Colonic mucosa (tissue), 4 donors: ENCODE measurements at regions of chr11 and their contacts with region 1.

Region 1: DNA sequence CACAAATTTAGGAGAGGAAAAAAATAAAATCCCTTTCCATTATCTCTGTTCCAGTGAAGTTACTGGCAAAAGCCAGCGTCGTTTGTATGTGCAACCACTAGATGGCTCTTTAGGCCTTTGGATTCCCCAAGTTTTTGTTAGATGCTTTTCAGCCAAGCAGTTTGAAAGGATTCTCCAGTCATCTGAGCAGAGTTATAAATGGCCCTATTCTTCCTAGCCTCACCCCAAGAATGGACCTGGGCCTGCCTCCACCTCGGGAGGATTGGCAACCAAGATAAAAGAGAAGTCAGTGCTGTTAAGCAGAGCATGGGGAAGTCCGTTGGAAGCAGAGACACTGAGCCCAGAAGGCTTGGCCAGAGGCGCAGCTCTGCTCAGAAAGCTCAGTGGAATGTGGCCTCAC is 15.4 kb downstream of the FAM181B start:
- DNase-seq: no peak
- H3K4me3 ChIP-seq: no peak overlapping the region
- H3K27ac ChIP-seq: no peak overlapping the region
- H3K4me1 ChIP-seq: no peaks in the 10 kb centered on the region
- H3K27me3 ChIP-seq: no peaks in the 10 kb centered on the region
- CTCF ChIP-seq: peak; percentile 61

Region 2: GRCh38 chr11:82864268-82864667 is 146.0 kb after region 1 on chr11:
- intact Hi-C with region 1: loop called (anchors 5 kb)
- DNase-seq: peak; percentile 41
- H3K4me3 ChIP-seq: no peak overlapping the region
- H3K27ac ChIP-seq: no peak overlapping the region
- H3K4me1 ChIP-seq: no peaks in the 10 kb centered on the region
- H3K27me3 ChIP-seq: no peaks in the 10 kb centered on the region
- CTCF ChIP-seq: peak; percentile 35

Region 3: GRCh38 chr11:82927254-82927880 is 209.1 kb after region 1 on chr11:
- intact Hi-C with region 1: no loop called
- DNase-seq: peak; percentile 42
- H3K4me3 ChIP-seq: no peak overlapping the region
- H3K27ac ChIP-seq: no peak overlapping the region
- H3K4me1 ChIP-seq: no peaks in the 10 kb centered on the region
- H3K27me3 ChIP-seq: no peaks in the 10 kb centered on the region
- CTCF ChIP-seq: peak; percentile 85

Region 4: DNA sequence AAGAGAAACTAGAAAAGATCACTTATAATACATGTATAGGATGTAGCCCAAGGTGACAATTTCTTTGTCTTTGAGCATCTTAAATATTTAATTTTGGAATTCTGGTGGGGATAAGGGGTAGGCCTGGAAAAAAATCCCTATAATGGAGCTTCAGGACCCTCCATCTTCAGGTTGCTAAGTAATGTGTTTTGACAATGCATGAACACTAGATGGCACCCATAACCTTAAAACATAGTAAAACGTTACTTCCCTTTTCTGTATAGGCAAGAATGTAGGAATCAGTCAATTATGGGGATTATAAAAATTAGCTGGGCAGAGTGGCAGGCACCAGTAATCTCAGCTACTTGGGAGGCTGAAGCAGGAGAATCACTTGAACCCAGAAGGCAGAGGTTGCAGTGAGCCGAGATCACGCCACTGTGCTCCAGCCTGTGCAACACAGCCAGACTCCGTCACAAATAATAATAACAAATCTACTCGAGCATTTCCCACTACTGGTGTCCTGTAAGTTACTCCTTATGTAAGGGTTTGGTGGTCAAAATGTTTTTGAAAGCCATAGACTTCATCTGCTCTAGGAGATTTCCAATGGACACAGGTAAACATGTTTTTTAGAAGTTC is 1109.7 kb after region 1 on chr11:
- intact Hi-C with region 1: loop called (anchors 10 kb)
- DNase-seq: no peak
- H3K4me3 ChIP-seq: no peak overlapping the region
- H3K27ac ChIP-seq: no peak overlapping the region
- H3K4me1 ChIP-seq: no peaks in the 10 kb centered on the region
- H3K27me3 ChIP-seq: no peaks in the 10 kb centered on the region
- CTCF ChIP-seq: no peak